ENCODE measurements at regions of chr10 and their contacts with region 1.

Region 1: GRCh38 chr10:46030091-46030937 is at the start of gene NCOA4:
- DNase-seq: peak; percentile 97
- ATAC-seq: peak; percentile 83
- H3K4me3 ChIP-seq: peak within 1 kb of the TSS; percentile 85 to 92 (median 88)
- H3K27ac ChIP-seq: peak within 1 kb of the TSS; percentile 86
- H3K4me1 ChIP-seq: peaks cover 79% of the 10 kb centered on the region
- H3K27me3 ChIP-seq: no peaks in the 10 kb centered on the region; a peak in 1 of 5 replicates
- CTCF ChIP-seq: peak; percentile 92
- EP300 ChIP-seq: 0 out of 4 replicates have a peak, but pooled peaks of 1 of the 2 experiments have one; percentile 6
- POLR2A ChIP-seq: peak; percentile 95 to 97
- RAD21 ChIP-seq: no peak
- total RNA-seq, gene NCOA4: 306 and 519 TPM in 2 replicates

Region 2: DNA sequence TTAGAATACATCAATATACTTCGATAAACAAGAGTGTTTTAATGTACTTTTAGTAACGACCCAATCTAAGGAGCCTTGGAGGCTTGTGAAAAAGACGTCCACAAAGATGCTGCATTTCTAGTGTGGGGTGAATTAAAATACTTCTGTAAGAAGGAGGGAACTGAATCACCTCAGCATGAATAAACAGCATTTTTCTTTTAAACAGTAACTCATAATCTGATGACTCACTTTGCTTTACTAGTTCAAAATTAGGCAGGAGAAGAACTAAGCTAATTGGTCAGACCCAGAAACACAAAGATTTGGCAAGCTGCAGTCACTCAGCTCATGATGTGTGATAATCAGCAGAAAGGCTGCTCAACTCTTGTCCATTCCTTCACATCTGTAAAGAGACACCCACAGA is 24.1 kb before region 1 on chr10:
- CTCF ChIA-PET with region 1: no interaction called
- POLR2A ChIA-PET with region 1: interaction called, 147 read pairs
- in situ Hi-C with region 1: no loop called
- intact Hi-C with region 1: no loop called
- DNase-seq: no peak
- ATAC-seq: no peak
- H3K4me3 ChIP-seq: no peak overlapping the region
- H3K27ac ChIP-seq: no peak overlapping the region
- H3K4me1 ChIP-seq: peaks cover 71% of the 10 kb centered on the region
- H3K27me3 ChIP-seq: no peaks in the 10 kb centered on the region
- CTCF ChIP-seq: no peak
- EP300 ChIP-seq: no peak
- POLR2A ChIP-seq: no peak
- RAD21 ChIP-seq: no peak

Region 3: GRCh38 chr10:46050941-46051623 is 20.8 kb after region 1 on chr10:
- CTCF ChIA-PET with region 1: no interaction called
- POLR2A ChIA-PET with region 1: interaction called, 49 read pairs
- in situ Hi-C with region 1: no loop called
- intact Hi-C with region 1: loop called (anchors 1 kb)
- DNase-seq: no peak
- ATAC-seq: no peak
- H3K4me3 ChIP-seq: no peak overlapping the region
- H3K27ac ChIP-seq: peak overlapping the region; percentile 75
- H3K4me1 ChIP-seq: peaks cover 88% of the 10 kb centered on the region
- H3K27me3 ChIP-seq: no peaks in the 10 kb centered on the region
- CTCF ChIP-seq: no peak
- EP300 ChIP-seq: no peak
- POLR2A ChIP-seq: no peak
- RAD21 ChIP-seq: no peak

Region 4: DNA sequence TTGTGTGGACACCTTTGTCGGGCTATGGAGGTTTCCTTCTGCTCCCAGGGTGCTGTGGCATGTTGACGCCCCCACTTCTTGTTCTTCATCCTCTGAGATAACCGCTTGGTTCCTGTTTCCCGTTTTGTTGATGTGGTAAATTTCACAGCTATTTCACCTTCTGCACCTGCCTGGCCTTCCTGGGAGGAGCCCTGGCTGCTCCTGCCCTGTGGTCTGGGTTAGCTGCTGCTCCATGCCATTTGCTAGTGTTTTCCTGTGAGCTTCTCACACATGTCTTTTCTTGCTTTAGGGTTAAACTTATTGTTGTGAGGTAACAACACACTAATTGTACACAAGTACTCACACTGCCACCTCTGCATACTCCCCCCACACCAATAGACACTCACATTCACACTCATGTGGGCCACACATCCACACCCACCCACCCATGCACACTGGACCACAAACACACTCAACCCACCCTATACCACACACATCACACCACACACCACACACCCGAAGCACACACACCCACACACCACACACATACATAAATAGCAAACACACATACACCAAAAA is 62.3 kb after region 1 on chr10:
- CTCF ChIA-PET with region 1: no interaction called
- POLR2A ChIA-PET with region 1: interaction called, 5 read pairs
- in situ Hi-C with region 1: loop called (anchors 5 kb)
- intact Hi-C with region 1: loop called (anchors 5 kb)
- DNase-seq: no peak
- ATAC-seq: no peak
- H3K4me3 ChIP-seq: peak overlapping the region in 1 of 3 experiments; percentile 18; a peak in 1 of 6 replicates
- H3K27ac ChIP-seq: no peak overlapping the region
- H3K4me1 ChIP-seq: peaks cover 86% of the 10 kb centered on the region
- H3K27me3 ChIP-seq: no peaks in the 10 kb centered on the region
- CTCF ChIP-seq: no peak
- EP300 ChIP-seq: no peak
- POLR2A ChIP-seq: no peak
- RAD21 ChIP-seq: no peak

Measured in HepG2 (cell line).